Dorsolateral prefrontal cortex (tissue), 120 donors: ENCODE measurements at regions of chr11 and their contacts with region 1.

Region 1: DNA sequence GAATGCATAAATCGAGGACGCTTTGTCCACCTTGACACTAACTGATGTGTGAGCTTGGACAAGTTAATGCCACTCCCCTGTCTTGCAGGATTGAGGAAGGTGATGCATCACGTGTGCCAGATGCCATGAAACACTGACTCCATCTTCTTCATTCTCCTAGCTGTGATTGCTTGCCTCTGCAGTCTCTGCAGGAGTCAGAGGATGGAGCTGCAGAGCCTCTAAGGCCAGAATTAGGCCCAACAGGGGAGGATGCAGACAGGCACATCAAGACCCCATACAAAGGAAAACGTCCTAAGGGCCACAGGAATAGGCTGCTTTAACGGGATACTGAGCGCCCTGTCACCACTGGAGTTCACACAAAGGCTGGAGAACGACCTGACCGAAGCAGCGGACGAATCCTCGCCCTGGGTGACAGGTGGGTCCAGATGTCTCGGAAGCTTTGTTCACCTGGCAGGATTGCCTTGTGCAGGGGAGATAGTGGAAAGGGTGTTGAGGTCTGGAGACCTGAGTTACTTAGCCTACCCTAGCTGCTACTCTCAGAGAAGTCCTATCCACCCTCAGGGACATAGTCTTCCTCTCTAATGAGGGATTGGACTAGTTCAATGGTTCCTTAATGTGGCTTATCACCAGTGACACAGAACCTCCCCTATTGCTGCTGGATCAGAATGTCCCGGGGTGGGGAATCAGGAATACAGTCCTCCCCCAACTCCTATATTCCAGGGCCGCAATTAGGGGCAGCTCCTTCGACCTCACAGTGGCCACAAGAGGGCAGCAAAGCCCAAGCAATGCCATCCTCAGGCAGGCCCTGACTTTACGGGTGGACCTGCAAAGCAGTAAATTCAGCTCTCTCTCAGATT is 32.4 kb downstream of the DBX1 start:
- DNase-seq: peak; percentile 76 to 88 (median 85)
- H3K4me3 ChIP-seq: no peak overlapping the region
- H3K27ac ChIP-seq: peak overlapping the region in 1 of 59 donors; percentile 4
- H3K27me3 ChIP-seq: no peaks in the 10 kb centered on the region
- CTCF ChIP-seq: peak; percentile 78 to 95 (median 89)

Region 2: DNA sequence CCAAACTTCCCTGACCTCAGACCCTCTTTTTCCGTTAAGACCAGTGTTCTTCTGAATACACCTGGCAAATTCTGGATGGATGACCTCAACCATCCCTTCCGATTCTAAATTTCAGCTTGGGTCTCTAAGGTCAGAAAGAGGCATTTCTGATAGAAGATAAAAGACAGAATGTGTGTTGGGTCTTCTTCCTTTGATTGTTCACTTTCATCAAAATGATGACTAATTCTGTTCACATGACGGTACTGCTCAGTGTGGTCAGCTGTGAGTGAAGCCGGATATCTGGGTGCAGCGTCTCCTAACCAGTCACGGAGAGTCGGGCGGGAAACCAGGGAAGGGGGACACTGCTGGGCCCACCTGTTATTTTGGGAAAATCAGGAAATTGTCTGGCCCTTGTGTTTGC is 566.9 kb before region 1 on chr11:
- intact Hi-C with region 1: loop called in 1 of 2 experiments (anchors 10 kb)
- DNase-seq: no peak
- H3K4me3 ChIP-seq: no peak overlapping the region
- H3K27ac ChIP-seq: no peak overlapping the region
- H3K27me3 ChIP-seq: no peaks in the 10 kb centered on the region
- CTCF ChIP-seq: no peak

Region 3: DNA sequence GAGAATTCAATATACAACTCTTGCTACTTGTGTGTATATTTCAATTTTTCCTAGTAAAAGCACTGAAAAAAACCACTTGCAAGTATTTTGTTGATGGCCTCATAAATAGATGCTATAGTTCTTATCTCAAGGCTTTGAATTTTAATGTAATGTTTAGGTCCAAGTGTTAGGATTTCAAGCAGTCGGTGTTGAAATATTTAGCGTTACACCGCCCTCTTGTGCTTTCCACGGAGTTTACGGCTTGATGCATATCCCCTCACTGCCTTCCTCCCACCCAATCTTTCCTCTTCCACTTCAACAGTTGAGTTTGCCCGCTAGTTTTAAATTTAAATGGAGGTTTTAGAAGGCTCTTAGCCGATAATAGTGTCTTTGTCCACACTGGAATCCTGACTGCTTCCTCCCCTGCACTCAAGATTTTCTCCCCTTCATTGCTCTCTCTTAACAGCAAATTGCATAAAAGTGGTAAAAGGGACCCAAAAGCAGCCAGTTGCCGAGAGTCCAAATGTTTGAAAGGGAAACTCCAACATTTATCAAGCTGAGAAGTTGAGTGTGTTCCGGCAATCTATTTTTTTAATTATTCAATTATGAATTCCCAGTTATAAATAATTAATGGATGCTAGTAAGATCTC is 209.7 kb after region 1 on chr11:
- intact Hi-C with region 1: loop called in 1 of 2 experiments (anchors 2 kb)
- DNase-seq: peak in 1 of 10 donors; percentile 38
- H3K4me3 ChIP-seq: no peak overlapping the region
- H3K27ac ChIP-seq: no peak overlapping the region
- H3K27me3 ChIP-seq: peaks cover 0 to 49% (median 11%) of the 10 kb centered on the region in 45 donors
- CTCF ChIP-seq: peak in 55 of 56 donors; percentile 20 to 79 (median 58)

Region 4: GRCh38 chr11:20443596-20443995 is 315.7 kb after region 1 on chr11:
- intact Hi-C with region 1: loop called in 1 of 2 experiments (anchors 5 kb)
- DNase-seq: no peak
- H3K4me3 ChIP-seq: no peak overlapping the region
- H3K27ac ChIP-seq: no peak overlapping the region
- H3K27me3 ChIP-seq: no peaks in the 10 kb centered on the region
- CTCF ChIP-seq: peak in 49 of 56 donors; percentile 12 to 73 (median 41)